Activated CD8-positive, alpha-beta T cell treated with anti-CD3 and anti-CD28 coated beads, Interleukin-2, amount 10 ng/mL, durations not matched to agents 7 days and 5 days (primary cell): ENCODE measurements at regions of chr10 and their contacts with region 1.

Region 1: DNA sequence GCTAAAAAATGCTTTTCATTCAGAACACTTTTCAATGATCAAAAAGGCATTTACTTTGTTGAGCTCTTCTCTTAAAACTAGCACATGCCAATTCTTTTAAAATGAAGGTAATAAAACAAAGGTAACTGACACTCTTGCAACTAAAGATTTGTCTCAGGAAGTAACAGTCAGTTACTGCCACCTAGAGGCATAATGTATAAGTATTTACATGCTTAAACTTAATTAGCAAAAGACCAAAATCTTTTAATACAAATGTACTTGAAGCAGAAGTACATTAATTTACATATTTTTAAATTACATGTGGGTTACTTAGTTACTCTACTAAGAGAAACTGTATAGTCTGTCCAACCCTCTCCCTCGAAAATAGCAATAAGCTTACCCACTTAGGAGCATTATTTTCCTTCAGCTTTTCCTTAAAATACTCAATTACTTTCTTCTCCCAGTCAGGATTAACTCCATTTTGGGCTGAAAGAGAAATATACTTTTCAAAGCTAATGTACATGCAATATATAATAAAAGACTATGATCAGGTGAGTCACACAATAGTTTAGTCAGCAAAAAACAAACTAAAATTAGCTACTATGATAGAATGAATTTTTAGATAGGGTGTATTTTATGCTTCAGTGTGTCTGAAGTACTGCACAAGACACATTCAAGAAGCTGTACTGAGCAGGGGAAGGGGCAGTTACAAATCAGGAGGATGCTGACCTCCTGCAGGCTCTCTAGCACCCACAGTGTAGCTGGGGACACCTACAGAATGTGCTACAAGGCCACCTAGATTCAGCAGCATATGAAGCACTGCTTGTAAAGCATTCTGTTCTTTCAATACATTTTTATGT is 13.0 kb downstream of the MCMBP start:
- DNase-seq: no peak
- ATAC-seq: peak; percentile 61
- H3K4me3 Mint-ChIP-seq: no peak overlapping the region
- H3K27ac Mint-ChIP-seq: no peak overlapping the region
- H3K4me1 Mint-ChIP-seq: peaks cover 41% of the 10 kb centered on the region
- H3K27me3 Mint-ChIP-seq: no peaks in the 10 kb centered on the region

Region 2: DNA sequence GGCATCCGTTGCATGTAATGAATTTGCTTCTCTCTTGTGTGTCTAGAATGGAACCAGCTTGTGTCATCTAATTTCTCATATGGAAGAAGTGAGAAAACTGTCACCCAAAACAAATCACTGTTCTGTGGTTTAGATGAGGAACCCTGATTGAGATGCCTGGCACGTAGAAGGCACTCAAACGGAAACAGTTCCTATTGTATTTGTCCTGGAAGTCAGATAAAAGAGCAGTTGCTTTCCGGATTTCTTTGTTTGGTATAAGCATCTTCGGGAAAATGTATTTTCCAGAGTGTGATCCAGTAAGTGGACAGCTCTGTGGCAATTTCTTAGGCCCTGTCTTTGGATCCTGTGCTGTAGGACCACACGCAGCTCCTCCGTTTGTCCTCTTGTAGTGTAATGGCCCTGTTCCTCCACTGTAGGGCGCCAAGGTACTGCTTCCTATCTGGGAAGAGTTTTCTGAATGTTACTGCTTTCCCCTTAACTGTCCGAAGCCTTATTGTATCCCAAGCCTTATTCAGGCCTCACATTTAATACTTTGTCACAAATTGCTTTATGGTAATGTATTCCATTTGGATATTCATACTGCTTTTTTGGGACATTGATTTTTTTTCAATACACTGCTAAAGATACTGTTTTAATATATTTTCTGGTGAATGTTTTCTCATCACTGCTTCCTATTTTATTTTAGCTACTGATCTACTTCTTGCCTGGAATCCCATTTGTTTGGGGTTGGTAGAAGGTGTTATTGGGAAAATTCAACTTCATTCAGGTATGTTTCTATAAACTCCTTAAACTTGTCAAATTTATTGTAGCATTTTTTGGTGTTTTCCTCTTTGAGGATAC is 109.0 kb before region 1 on chr10:
- CTCF ChIA-PET with region 1: interaction called, 154 read pairs
- POLR2A ChIA-PET with region 1: no interaction called
- DNase-seq: peak; percentile 72
- ATAC-seq: peak; percentile 75
- H3K4me3 Mint-ChIP-seq: no peak overlapping the region
- H3K27ac Mint-ChIP-seq: no peak overlapping the region
- H3K4me1 Mint-ChIP-seq: peaks cover 1% of the 10 kb centered on the region
- H3K27me3 Mint-ChIP-seq: no peaks in the 10 kb centered on the region

Region 3: GRCh38 chr10:119834188-119834587 is 25.5 kb before region 1 on chr10:
- CTCF ChIA-PET with region 1: interaction called, 14 read pairs
- POLR2A ChIA-PET with region 1: no interaction called
- DNase-seq: no peak
- ATAC-seq: peak; percentile 36
- H3K4me3 Mint-ChIP-seq: no peak overlapping the region
- H3K27ac Mint-ChIP-seq: peak overlapping the region; percentile 68
- H3K4me1 Mint-ChIP-seq: peaks cover 15% of the 10 kb centered on the region
- H3K27me3 Mint-ChIP-seq: no peaks in the 10 kb centered on the region

Region 4: GRCh38 chr10:119872860-119873681 is 13.4 kb after region 1 on chr10:
- CTCF ChIA-PET with region 1: interaction called, 53 read pairs
- POLR2A ChIA-PET with region 1: interaction called, 16 read pairs
- DNase-seq: peak; percentile 91
- ATAC-seq: peak; percentile 93
- H3K4me3 Mint-ChIP-seq: peak overlapping the region; percentile 82
- H3K27ac Mint-ChIP-seq: peak overlapping the region; percentile 86
- H3K4me1 Mint-ChIP-seq: peaks cover 35% of the 10 kb centered on the region
- H3K27me3 Mint-ChIP-seq: no peaks in the 10 kb centered on the region